ENCODE measurements at regions of chr22 and their contacts with region 1.

Region 1: GRCh38 chr22:21867528-21868266 is at the start of gene MAPK1:
- DNase-seq: peak; percentile 100
- ATAC-seq: peak; percentile 92
- H3K4me3 ChIP-seq: peak within 1 kb of the TSS; percentile 55
- H3K27ac ChIP-seq: peak within 1 kb of the TSS; percentile 81
- H3K4me1 ChIP-seq: peaks cover 52 to 57% of the 10 kb centered on the region in 2 experiments
- H3K27me3 ChIP-seq: no peaks in the 10 kb centered on the region
- CTCF ChIP-seq: no peak
- EP300 ChIP-seq: no peak
- POLR2A ChIP-seq: no peak
- RAD21 ChIP-seq: no peak
- polyA plus RNA-seq, gene MAPK1: 46.3 to 51.4 TPM

Region 2: GRCh38 chr22:20916983-20917810 is 950.5 kb before region 1 on chr22 and contains the start of gene CRKL:
- CTCF ChIA-PET with region 1: no interaction called
- POLR2A ChIA-PET with region 1: no interaction called
- in situ Hi-C with region 1: no loop called
- intact Hi-C with region 1: loop called (anchors 5 kb)
- DNase-seq: peak; percentile 100
- ATAC-seq: peak; percentile 93
- H3K4me3 ChIP-seq: peak within 1 kb of the TSS; percentile 67
- H3K27ac ChIP-seq: peak within 1 kb of the TSS; percentile 89
- H3K4me1 ChIP-seq: peaks cover 20 to 41% of the 10 kb centered on the region in 2 experiments
- H3K27me3 ChIP-seq: no peaks in the 10 kb centered on the region
- CTCF ChIP-seq: peak; percentile 99 to 100 (median 100)
- EP300 ChIP-seq: peak; percentile 88
- POLR2A ChIP-seq: no peak
- RAD21 ChIP-seq: no peak
- polyA plus RNA-seq, gene CRKL: 100 to 105 TPM

Region 3: DNA sequence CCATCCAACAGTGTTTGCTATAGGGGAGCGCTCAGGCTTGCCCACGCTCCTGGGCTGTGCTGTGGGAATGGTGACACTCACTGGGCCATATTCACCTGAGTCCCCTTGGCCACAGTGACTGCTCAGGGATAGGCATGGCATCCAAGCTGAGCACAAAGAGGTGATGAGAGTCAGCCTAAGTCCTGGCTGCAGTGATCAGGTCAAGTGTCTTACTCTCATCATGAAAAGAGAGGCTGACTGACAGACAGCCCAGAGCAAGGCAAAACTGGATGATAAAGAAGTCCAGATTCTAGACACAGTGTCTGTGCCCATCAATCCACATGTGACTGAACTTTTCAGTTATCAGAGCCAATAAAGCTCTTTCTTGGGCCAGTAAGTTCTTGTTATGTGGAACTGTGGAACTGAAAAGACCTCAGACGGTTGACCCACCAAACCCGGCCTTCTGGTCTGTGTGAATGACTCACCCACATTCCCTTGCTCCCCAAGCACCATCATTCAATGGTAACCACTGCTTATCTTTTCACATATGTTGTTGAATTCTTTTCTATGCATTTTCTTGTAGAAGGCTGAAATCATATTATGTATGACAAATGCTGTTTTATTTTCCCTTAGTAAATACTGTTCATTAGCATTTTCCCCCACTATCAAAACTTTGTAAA is 88.9 kb before region 1 on chr22:
- CTCF ChIA-PET with region 1: no interaction called
- POLR2A ChIA-PET with region 1: interaction called, 4 read pairs
- in situ Hi-C with region 1: no loop called
- intact Hi-C with region 1: loop called (anchors 5 kb)
- DNase-seq: peak; percentile 84 to 90 (median 88)
- ATAC-seq: peak; percentile 61
- H3K4me3 ChIP-seq: no peak overlapping the region
- H3K27ac ChIP-seq: peak overlapping the region; percentile 7; the same call in 2 of the 3 replicates
- H3K4me1 ChIP-seq: peaks cover 0 to 12% of the 10 kb centered on the region in 2 experiments; a peak in 2 of 5 replicates
- H3K27me3 ChIP-seq: no peaks in the 10 kb centered on the region
- CTCF ChIP-seq: no peak
- EP300 ChIP-seq: peak; percentile 30; the same call in 1 of the 2 replicates
- POLR2A ChIP-seq: no peak
- RAD21 ChIP-seq: no peak

Region 4: DNA sequence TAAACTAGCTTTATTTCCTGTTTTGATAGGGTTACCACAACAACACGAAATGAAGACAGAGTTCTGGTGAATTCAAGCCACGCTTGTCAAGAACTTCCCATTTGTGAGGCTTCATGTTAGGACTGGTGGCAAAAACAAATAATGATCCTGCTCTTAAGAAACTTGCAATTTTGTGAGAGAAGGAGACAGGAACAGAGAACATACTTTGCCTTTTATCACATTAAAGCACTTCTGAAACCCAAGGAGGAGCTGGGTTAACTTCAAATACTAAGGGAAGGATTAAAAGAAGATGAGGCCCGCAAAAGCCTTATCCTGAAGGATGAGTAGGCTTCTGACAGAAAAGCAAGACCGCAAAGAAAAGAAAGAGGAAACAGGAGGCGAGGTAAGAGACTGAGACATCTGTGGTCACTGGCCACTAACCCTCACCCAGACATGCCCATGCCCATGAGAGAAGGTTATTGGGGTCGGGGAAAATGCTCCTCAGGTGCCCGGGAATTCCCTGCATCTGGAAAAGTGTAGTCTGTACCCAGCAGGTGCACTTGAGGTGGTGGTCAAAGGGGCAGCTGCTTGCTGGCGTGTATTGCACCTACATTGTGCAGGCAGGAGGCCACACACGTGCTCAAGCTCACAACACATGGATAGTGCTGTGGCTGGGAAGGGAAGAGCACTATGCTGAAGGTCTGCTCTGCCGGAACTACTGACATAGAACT is 50.8 kb before region 1 on chr22:
- CTCF ChIA-PET with region 1: no interaction called
- POLR2A ChIA-PET with region 1: interaction called, 6 read pairs
- in situ Hi-C with region 1: no loop called
- intact Hi-C with region 1: loop called (anchors 1 kb)
- DNase-seq: peak; percentile 72 to 87 (median 80)
- ATAC-seq: peak; percentile 69
- H3K4me3 ChIP-seq: no peak overlapping the region
- H3K27ac ChIP-seq: peak overlapping the region; percentile 57
- H3K4me1 ChIP-seq: peaks cover 27 to 33% of the 10 kb centered on the region in 2 experiments
- H3K27me3 ChIP-seq: no peaks in the 10 kb centered on the region
- CTCF ChIP-seq: no peak
- EP300 ChIP-seq: no peak
- POLR2A ChIP-seq: no peak
- RAD21 ChIP-seq: no peak

Region 5: GRCh38 chr22:21881841-21882753 is 14.4 kb after region 1 on chr22:
- CTCF ChIA-PET with region 1: interaction called, 5 read pairs
- POLR2A ChIA-PET with region 1: interaction called, 1,351 read pairs
- in situ Hi-C with region 1: no loop called
- intact Hi-C with region 1: no loop called
- DNase-seq: peak in 3 of 4 experiments; percentile 41 to 52 (median 46)
- ATAC-seq: peak; percentile 40
- H3K4me3 ChIP-seq: no peak overlapping the region
- H3K27ac ChIP-seq: no peak overlapping the region
- H3K4me1 ChIP-seq: peaks cover 4 to 10% of the 10 kb centered on the region in 2 experiments
- H3K27me3 ChIP-seq: peaks cover 4 to 25% of the 10 kb centered on the region in 2 experiments; a peak in 4 of 5 replicates
- CTCF ChIP-seq: no peak
- EP300 ChIP-seq: no peak
- POLR2A ChIP-seq: no peak
- RAD21 ChIP-seq: no peak

Region 6: GRCh38 chr22:21996175-21996720 is 128.6 kb after region 1 on chr22:
- CTCF ChIA-PET with region 1: no interaction called
- POLR2A ChIA-PET with region 1: no interaction called
- in situ Hi-C with region 1: no loop called
- intact Hi-C with region 1: no loop called
- DNase-seq: no peak
- ATAC-seq: no peak
- H3K4me3 ChIP-seq: no peak overlapping the region
- H3K27ac ChIP-seq: no peak overlapping the region
- H3K4me1 ChIP-seq: peaks cover 9 to 22% of the 10 kb centered on the region in 2 experiments
- H3K27me3 ChIP-seq: no peaks in the 10 kb centered on the region
- CTCF ChIP-seq: no peak
- EP300 ChIP-seq: no peak
- POLR2A ChIP-seq: no peak
- RAD21 ChIP-seq: no peak